ENCODE measurements at regions of chr3 and their contacts with region 1.

Region 1: DNA sequence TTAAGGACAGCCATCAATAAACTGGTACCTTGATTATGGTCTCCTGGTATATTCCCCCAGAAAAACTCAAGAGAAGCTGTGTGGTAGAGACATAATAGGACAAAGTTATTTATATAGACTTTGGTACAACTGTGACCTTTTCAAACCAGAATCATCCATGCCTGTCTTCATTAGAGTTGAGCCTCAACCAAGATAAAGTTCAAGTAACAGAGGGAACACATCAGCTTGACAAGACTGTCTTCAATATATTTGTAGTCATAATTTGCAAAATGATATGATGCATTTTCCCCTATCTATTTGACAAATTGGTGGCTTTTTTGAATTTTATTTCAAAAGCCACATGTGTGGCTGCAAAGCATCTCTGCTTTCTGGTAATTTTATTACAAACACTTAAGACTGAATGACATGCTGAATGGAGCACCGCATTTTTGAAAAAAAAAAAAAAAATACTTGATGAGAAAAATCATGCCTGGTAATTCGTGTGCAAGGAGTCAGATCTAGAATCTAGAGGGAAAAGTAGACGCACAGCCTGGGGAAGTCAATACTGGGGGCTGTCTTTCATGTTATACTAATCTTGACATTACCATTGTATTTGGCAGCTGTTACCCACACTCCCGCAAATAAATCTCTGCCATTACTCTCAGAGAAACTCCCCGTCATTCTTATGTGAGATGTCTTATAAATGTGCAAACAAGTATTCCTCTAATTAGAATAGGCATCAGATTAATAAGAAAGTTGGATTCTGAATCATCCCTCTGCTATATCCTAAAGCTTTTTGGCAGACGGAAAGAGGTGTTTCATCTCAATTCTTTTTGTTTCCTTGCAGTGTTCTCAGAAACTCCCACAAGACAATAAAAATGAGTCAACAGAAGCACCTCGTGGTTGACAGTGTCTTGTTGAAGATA is 554.8 kb upstream of the CBLB start:
- DNase-seq: no peak
- H3K4me3 Mint-ChIP-seq: peak overlapping the region; percentile 13
- H3K27ac Mint-ChIP-seq: peak overlapping the region; percentile 85
- H3K4me1 Mint-ChIP-seq: peaks cover 43% of the 10 kb centered on the region
- H3K27me3 Mint-ChIP-seq: no peaks in the 10 kb centered on the region

Region 2: GRCh38 chr3:105752744-105753415 is 670.7 kb before region 1 on chr3:
- intact Hi-C with region 1: loop called (anchors 2 kb)
- DNase-seq: peak; percentile 83
- H3K4me3 Mint-ChIP-seq: peak overlapping the region; percentile 64
- H3K27ac Mint-ChIP-seq: peak overlapping the region; percentile 95
- H3K4me1 Mint-ChIP-seq: peaks cover 67% of the 10 kb centered on the region
- H3K27me3 Mint-ChIP-seq: no peaks in the 10 kb centered on the region

Region 3: DNA sequence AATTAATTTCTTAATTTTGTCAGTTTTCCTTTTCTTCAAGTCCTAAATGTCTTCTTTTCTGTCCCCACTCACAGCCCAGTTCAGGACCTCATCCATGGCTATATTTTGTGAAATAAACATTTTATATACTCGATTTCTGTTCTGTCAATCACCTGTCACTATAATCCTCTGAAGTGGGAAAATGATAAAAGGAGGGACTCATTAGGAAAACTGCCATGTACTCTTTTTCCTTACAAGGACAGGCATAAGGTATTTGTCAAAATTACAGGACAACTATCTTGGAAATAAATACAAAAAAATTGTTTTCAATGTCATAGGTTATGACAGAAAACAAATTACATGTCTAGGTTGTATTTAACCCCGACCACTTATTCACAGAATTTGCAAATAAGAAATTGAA is 314.6 kb before region 1 on chr3:
- intact Hi-C with region 1: no loop called
- DNase-seq: no peak
- H3K4me3 Mint-ChIP-seq: no peak overlapping the region
- H3K27ac Mint-ChIP-seq: no peak overlapping the region
- H3K4me1 Mint-ChIP-seq: peaks cover 11% of the 10 kb centered on the region
- H3K27me3 Mint-ChIP-seq: no peaks in the 10 kb centered on the region

Region 4: DNA sequence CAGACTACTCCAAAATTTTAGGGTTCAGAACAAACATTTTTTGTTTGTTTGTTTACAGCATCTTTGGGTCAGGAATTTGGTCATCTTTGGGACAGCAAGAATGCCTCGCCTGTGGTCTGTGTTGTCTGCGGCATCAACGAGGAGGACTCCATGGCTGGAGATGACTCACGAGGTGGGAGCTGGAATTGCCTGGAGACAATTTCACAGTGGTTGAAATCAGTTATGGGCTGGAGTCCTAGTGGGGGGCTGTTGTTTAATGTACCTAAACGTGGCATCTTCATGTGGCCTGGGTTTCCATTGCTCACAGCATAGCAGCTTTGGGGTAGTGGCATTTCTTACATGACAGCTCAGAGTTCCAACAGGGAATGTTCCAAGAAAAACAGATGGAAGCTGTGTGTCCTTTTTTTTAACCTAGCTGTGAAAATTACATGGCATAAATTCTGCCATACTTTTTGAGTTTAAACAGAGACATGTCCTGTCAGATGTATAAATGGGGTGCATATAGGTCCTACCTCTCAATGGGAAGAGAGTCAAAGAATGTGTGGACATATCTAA is 47.5 kb before region 1 on chr3:
- intact Hi-C with region 1: no loop called
- DNase-seq: no peak
- H3K4me3 Mint-ChIP-seq: no peak overlapping the region
- H3K27ac Mint-ChIP-seq: no peak overlapping the region
- H3K4me1 Mint-ChIP-seq: peaks cover 2% of the 10 kb centered on the region
- H3K27me3 Mint-ChIP-seq: no peaks in the 10 kb centered on the region

Region 5: GRCh38 chr3:106392915-106393314 is 30.7 kb before region 1 on chr3:
- intact Hi-C with region 1: loop called (anchors 2 kb)
- DNase-seq: no peak
- H3K4me3 Mint-ChIP-seq: no peak overlapping the region
- H3K27ac Mint-ChIP-seq: no peak overlapping the region
- H3K4me1 Mint-ChIP-seq: peaks cover 2% of the 10 kb centered on the region
- H3K27me3 Mint-ChIP-seq: no peaks in the 10 kb centered on the region

Region 6: DNA sequence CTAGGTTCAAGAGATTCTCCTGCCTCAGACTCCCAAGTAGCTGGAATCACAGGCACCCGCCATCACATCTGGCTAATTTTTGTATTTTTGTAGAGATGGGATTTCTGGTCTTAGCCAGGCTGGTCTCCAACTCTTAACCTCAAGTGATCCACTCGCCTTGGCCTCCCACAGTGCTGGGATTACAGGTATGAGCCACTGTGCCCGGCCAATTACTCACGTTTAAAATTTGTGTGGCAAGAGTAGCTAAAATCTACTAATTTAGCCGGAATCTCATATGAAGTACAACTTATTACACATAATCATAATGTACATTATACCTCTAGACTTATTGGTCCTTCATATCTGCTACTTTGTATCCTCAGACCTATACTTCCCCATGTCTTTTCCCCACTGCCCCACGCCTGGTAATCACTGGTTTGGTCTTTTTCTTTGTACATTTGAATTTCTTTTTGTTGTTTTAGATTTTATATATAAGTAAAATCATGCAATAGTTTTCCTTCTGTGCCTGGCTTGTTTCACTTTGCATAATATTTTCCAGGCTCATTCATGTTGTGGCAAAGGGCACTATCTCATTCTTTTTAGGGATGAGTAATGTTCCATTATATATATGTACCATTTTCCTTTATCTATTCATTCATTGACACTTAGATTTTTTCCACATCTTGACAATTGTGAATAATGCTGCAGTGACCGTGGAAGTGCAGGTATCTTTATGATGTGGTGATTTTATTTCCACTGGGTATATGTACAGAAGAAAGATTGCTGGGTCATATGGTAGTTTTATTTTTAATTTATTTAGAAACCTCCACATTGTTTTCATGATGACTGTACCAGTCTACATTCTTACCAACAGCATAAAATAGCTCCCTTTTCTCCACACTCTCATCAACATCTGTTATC is 50.3 kb after region 1 on chr3:
- intact Hi-C with region 1: loop called (anchors 1 kb)
- DNase-seq: no peak
- H3K4me3 Mint-ChIP-seq: no peak overlapping the region
- H3K27ac Mint-ChIP-seq: peak overlapping the region; percentile 83
- H3K4me1 Mint-ChIP-seq: peaks cover 8% of the 10 kb centered on the region
- H3K27me3 Mint-ChIP-seq: no peaks in the 10 kb centered on the region

Region 7: GRCh38 chr3:106518516-106518915 is 94.9 kb after region 1 on chr3:
- intact Hi-C with region 1: no loop called
- DNase-seq: no peak
- H3K4me3 Mint-ChIP-seq: no peak overlapping the region
- H3K27ac Mint-ChIP-seq: no peak overlapping the region
- H3K4me1 Mint-ChIP-seq: peaks cover 2% of the 10 kb centered on the region
- H3K27me3 Mint-ChIP-seq: no peaks in the 10 kb centered on the region

Region 8: DNA sequence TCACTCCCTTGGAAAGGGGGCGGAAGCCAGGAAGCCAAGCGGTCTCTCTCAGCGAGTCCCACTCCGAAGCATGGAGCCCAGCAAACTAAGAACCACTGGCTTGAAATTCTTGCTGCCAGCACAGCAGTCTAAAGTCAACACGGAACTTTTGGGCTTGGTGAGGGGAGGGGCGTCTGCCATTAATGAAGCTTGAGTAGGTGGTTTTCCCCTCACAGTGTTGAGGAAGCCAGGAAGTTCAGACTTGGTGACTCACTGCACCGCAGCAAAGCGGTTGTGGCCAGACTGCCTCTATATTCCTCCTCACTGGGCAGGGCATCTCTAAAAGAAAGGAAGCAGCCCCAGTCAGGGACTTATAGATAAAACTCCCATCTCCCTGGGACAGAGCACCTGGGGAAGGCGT is 110.6 kb after region 1 on chr3:
- intact Hi-C with region 1: loop called (anchors 1 kb)
- DNase-seq: peak; percentile 81
- H3K4me3 Mint-ChIP-seq: no peak overlapping the region
- H3K27ac Mint-ChIP-seq: peak overlapping the region; percentile 81
- H3K4me1 Mint-ChIP-seq: peaks cover 17% of the 10 kb centered on the region
- H3K27me3 Mint-ChIP-seq: no peaks in the 10 kb centered on the region

Region 9: DNA sequence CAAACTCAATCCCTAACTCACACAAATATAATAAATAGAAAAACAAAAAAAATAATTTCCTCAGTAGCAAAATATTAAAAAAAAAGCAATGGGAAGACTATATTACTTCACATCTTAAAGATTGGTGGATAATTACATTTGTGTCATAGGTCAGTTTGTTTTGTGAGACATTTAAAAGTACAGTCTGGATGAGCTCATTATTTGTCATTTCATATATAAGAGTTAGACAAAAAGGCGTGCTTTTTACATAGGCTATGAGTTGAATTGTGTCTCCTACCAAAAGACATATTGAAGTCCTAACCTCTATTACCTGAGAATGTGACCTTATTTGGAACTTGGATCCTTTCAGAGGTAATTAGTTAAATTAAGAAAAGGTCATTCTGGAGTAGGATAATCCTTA is 155.3 kb after region 1 on chr3:
- intact Hi-C with region 1: no loop called
- DNase-seq: no peak
- H3K4me3 Mint-ChIP-seq: no peak overlapping the region
- H3K27ac Mint-ChIP-seq: no peak overlapping the region
- H3K4me1 Mint-ChIP-seq: peaks cover 2% of the 10 kb centered on the region
- H3K27me3 Mint-ChIP-seq: no peaks in the 10 kb centered on the region